Gastrocnemius medialis (tissue), 4 donors: ENCODE measurements at regions of chr9 and their contacts with region 1.

Region 1: DNA sequence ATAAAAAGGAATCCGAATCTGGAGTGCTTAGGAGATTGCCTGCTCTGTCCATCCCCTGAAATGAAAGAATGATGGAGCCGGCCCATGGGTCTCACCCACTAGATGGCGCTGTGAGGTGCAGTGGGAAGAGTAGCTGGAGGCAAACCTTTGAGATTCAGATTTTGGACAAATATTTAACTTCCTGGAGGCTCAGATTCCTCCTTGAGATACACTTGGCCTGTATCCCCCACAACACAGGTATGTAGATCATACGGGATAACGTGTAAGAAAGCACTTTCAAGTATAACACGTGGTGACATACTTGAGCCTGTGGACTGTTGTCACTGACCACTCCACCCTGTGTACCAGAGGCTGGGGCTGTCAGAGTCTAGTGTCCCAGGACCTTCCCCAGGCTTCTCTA is 32.3 kb downstream of the TRMO start:
- DNase-seq: no peak
- ATAC-seq: no peak
- H3K4me3 ChIP-seq: no peak overlapping the region
- H3K27ac ChIP-seq: no peak overlapping the region
- H3K4me1 ChIP-seq: no peaks in the 10 kb centered on the region
- H3K27me3 ChIP-seq: no peaks in the 10 kb centered on the region
- CTCF ChIP-seq: peak in 4 of 5 experiments; percentile 5 to 50 (median 30)
- POLR2A ChIP-seq: no peak

Region 2: DNA sequence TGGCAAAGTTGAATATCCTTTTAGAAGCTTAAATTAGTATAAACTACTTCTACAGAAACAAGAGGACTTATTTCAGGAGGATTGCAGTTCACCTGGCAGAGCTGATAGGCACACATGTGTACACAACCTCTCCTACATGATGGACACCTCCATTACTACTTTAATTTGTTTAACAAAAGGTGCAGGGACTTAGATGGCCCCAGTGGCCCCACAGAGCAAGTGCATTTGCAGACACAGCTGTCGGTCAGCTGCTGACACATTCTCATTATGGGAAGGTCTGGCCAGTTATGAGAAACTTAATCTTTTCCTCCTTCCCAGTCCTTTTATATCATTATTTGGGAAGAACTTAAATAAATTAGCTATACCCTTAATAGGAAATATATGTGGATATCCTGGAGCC is 449.9 kb before region 1 on chr9:
- in situ Hi-C with region 1: loop called in 1 of 4 experiments (anchors 25 kb)
- intact Hi-C with region 1: no loop called
- DNase-seq: no peak
- ATAC-seq: no peak
- H3K4me3 ChIP-seq: no peak overlapping the region
- H3K27ac ChIP-seq: no peak overlapping the region
- H3K4me1 ChIP-seq: no peaks in the 10 kb centered on the region
- H3K27me3 ChIP-seq: no peaks in the 10 kb centered on the region
- CTCF ChIP-seq: no peak
- POLR2A ChIP-seq: no peak

Region 3: GRCh38 chr9:97689401-97689800 is 200.6 kb before region 1 on chr9:
- in situ Hi-C with region 1: no loop called
- intact Hi-C with region 1: no loop called
- DNase-seq: no peak
- ATAC-seq: no peak
- H3K4me3 ChIP-seq: no peak overlapping the region
- H3K27ac ChIP-seq: no peak overlapping the region
- H3K4me1 ChIP-seq: peaks cover 0 to 12% of the 10 kb centered on the region in 2 donors
- H3K27me3 ChIP-seq: no peaks in the 10 kb centered on the region
- CTCF ChIP-seq: no peak
- POLR2A ChIP-seq: no peak

Region 4: GRCh38 chr9:97710356-97711222 is 179.4 kb before region 1 on chr9:
- in situ Hi-C with region 1: loop called in 1 of 4 experiments (anchors 10 kb)
- intact Hi-C with region 1: no loop called
- DNase-seq: peak in 1 of 2 donors; percentile 19
- ATAC-seq: peak; percentile 80 to 94
- H3K4me3 ChIP-seq: no peak overlapping the region
- H3K27ac ChIP-seq: no peak overlapping the region
- H3K4me1 ChIP-seq: peaks cover 0 to 5% of the 10 kb centered on the region in 2 donors
- H3K27me3 ChIP-seq: no peaks in the 10 kb centered on the region
- CTCF ChIP-seq: peak; percentile 52 to 84 (median 75)
- POLR2A ChIP-seq: no peak

Region 5: DNA sequence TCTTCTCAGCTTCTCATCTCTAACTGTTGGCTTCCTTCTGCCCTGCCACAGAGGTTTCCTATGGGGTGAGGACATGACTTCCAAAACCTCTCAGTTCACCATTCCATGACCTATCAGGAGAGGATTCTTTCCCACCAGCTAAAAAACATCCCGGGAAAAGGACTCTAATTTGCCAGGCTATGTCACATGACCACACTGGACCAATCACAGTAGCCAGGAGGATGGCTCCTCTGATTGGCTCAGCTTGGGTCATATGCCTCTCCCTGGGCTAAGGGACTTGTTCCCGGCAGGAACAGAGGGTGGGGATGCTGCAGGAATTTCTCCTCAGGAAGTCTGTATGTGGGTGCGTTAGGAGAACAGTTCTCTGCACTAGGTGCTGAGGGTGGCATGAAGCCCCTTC is 152.6 kb before region 1 on chr9:
- in situ Hi-C with region 1: loop called in 1 of 4 experiments (anchors 10 kb)
- intact Hi-C with region 1: no loop called
- DNase-seq: no peak
- ATAC-seq: no peak
- H3K4me3 ChIP-seq: no peak overlapping the region
- H3K27ac ChIP-seq: no peak overlapping the region
- H3K4me1 ChIP-seq: peaks cover 9 to 15% of the 10 kb centered on the region in 2 donors
- H3K27me3 ChIP-seq: peaks cover 9 to 18% (median 13%) of the 10 kb centered on the region in 3 donors
- CTCF ChIP-seq: no peak
- POLR2A ChIP-seq: no peak

Region 6: GRCh38 chr9:97857606-97858392 is 32.2 kb before region 1 on chr9:
- in situ Hi-C with region 1: no loop called
- intact Hi-C with region 1: no loop called
- DNase-seq: no peak
- ATAC-seq: no peak
- H3K4me3 ChIP-seq: no peak overlapping the region
- H3K27ac ChIP-seq: no peak overlapping the region
- H3K4me1 ChIP-seq: peaks cover 6 to 8% of the 10 kb centered on the region in 2 donors
- H3K27me3 ChIP-seq: peaks cover 74 to 92% (median 80%) of the 10 kb centered on the region in 3 donors
- CTCF ChIP-seq: no peak
- POLR2A ChIP-seq: no peak